Gastrocnemius medialis (tissue), 4 donors: ENCODE measurements at regions of chr4 and their contacts with region 1.

Region 1: DNA sequence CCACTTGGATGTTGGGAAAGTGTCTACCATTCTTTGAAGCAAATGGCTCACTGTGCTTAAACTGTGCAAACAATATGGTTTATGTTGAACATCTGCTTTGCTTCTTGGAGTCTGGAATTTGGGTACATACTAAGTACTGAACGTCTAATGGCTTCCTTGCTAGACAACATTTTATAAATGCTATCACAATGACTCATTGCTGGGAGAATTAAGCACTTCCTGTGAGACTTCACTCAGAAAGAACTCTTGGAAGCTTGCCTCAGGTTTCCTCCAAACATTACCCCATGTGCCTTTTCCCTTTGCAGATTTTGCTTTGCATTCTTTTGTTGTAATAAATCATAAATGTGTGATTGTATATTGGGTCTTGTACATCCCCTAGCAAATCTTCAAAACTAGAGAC is 139.7 kb downstream of the PACRGL start:
- DNase-seq: no peak
- ATAC-seq: no peak
- H3K4me3 ChIP-seq: no peak overlapping the region
- H3K27ac ChIP-seq: no peak overlapping the region
- H3K4me1 ChIP-seq: no peaks in the 10 kb centered on the region
- H3K27me3 ChIP-seq: no peaks in the 10 kb centered on the region
- CTCF ChIP-seq: no peak
- POLR2A ChIP-seq: no peak

Region 2: DNA sequence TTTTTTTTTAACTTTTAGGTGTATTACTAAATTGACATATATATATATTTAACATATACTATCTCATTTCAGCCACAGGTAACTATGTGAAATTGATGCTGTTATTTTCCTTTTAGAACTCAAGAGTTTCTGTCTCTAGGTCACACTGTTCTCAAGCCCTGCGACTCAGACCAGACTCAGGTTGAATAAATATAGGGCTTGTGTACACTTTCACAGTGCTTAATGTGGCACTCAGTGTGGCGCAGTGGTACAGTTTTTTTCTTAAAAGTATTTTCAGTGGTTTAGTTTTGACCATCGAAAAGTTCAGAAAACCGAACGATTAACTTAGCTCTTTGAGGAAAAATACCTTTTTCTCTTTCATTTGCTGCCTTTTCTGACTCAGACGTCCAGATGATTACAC is 115.0 kb before region 1 on chr4:
- in situ Hi-C with region 1: loop called in 1 of 4 experiments (anchors 25 kb)
- intact Hi-C with region 1: no loop called
- DNase-seq: no peak
- ATAC-seq: no peak
- H3K4me3 ChIP-seq: no peak overlapping the region
- H3K27ac ChIP-seq: no peak overlapping the region
- H3K4me1 ChIP-seq: no peaks in the 10 kb centered on the region
- H3K27me3 ChIP-seq: no peaks in the 10 kb centered on the region
- CTCF ChIP-seq: no peak
- POLR2A ChIP-seq: no peak

Region 3: GRCh38 chr4:20944451-20944850 is 104.5 kb after region 1 on chr4:
- in situ Hi-C with region 1: no loop called
- intact Hi-C with region 1: no loop called
- DNase-seq: no peak
- ATAC-seq: no peak
- H3K4me3 ChIP-seq: no peak overlapping the region
- H3K27ac ChIP-seq: no peak overlapping the region
- H3K4me1 ChIP-seq: no peaks in the 10 kb centered on the region
- H3K27me3 ChIP-seq: no peaks in the 10 kb centered on the region
- CTCF ChIP-seq: no peak
- POLR2A ChIP-seq: no peak